Activated B cell treated with CpG ODN at 0.5 μM for 24 hours (primary cell): ENCODE measurements at regions of chr1 and their contacts with region 1.

Region 1: GRCh38 chr1:226083302-226084101 is 21.0 kb downstream of the H3-3A start:
- DNase-seq: peak; percentile 99
- ATAC-seq: peak; percentile 91
- H3K4me3 Mint-ChIP-seq: peak overlapping the region; percentile 88
- H3K27ac Mint-ChIP-seq: peak overlapping the region; percentile 68
- H3K4me1 Mint-ChIP-seq: peaks cover 25% of the 10 kb centered on the region
- H3K27me3 Mint-ChIP-seq: no peaks in the 10 kb centered on the region
- CTCF ChIP-seq: no peak

Region 2: DNA sequence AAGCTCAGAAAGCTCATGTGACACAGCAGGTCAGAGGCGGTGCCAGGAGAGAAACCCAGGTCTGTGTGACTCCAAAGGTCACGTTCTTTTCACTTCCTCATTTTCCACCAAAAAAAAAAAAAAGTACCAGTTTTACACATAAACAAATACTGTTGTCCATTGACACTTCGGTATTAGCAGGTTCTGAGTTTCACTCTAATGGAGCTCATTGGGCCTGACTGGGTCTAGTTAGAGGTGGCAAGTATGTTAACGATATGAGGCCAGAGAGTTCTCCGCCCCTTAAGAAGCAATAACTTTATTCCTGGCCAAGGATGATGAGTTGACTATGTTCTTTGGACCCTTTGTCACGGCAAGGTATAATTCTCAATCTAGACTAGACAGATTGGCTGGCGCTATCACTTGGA is 54.4 kb before region 1 on chr1:
- CTCF ChIA-PET with region 1: no interaction called
- POLR2A ChIA-PET with region 1: interaction called, 13 read pairs
- intact Hi-C with region 1: no loop called
- DNase-seq: peak; percentile 39
- ATAC-seq: peak; percentile 86
- H3K4me3 Mint-ChIP-seq: peak overlapping the region; percentile 68
- H3K27ac Mint-ChIP-seq: peak overlapping the region; percentile 94
- H3K4me1 Mint-ChIP-seq: peaks cover 45% of the 10 kb centered on the region
- H3K27me3 Mint-ChIP-seq: no peaks in the 10 kb centered on the region
- CTCF ChIP-seq: no peak

Region 3: DNA sequence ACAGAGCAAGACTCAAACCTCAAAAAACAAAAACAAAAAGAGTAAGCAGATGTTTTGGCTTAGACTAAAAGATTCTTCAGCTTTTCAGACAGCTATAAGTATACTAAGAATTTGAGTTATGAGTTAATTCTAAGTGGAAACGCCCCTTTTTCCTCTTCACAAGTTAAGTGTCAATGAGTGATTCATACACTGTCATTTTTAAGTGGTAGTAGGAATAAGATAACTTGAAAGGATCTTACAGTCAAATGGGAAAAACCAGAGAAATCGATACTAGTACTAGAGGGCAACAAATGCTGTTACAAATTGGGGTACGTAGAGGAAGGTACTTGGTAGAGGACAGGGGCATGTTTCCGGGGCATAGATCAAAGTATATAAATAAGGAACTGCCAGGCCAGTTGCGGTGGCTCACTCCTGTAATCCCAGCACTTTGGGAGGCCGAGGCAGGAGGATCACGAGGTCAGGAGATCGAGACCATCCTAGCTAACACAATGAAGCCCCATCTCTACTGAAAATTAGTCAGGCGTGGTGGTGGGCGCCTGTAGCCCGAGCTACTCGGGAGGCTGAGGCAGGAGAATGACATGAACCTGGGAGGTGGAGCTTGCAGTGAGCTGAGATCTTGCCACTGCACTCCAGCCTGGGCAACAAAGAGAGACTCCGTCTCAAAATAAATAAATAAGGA is 13.6 kb before region 1 on chr1:
- CTCF ChIA-PET with region 1: interaction called, 33 read pairs
- POLR2A ChIA-PET with region 1: interaction called, 26 read pairs
- intact Hi-C with region 1: loop called (anchors 1 kb)
- DNase-seq: no peak
- ATAC-seq: no peak
- H3K4me3 Mint-ChIP-seq: no peak overlapping the region
- H3K27ac Mint-ChIP-seq: no peak overlapping the region
- H3K4me1 Mint-ChIP-seq: peaks cover 51% of the 10 kb centered on the region
- H3K27me3 Mint-ChIP-seq: no peaks in the 10 kb centered on the region
- CTCF ChIP-seq: no peak

Region 4: GRCh38 chr1:226100436-226101391 is 17.2 kb after region 1 on chr1:
- CTCF ChIA-PET with region 1: interaction called, 3 read pairs
- POLR2A ChIA-PET with region 1: interaction called, 15 read pairs
- intact Hi-C with region 1: loop called (anchors 1 kb)
- DNase-seq: no peak
- ATAC-seq: peak; percentile 67
- H3K4me3 Mint-ChIP-seq: peak overlapping the region; percentile 87
- H3K27ac Mint-ChIP-seq: no peak overlapping the region
- H3K4me1 Mint-ChIP-seq: peaks cover 13% of the 10 kb centered on the region
- H3K27me3 Mint-ChIP-seq: no peaks in the 10 kb centered on the region
- CTCF ChIP-seq: no peak